ENCODE measurements at regions of chr6 and their contacts with region 1.

Region 1: DNA sequence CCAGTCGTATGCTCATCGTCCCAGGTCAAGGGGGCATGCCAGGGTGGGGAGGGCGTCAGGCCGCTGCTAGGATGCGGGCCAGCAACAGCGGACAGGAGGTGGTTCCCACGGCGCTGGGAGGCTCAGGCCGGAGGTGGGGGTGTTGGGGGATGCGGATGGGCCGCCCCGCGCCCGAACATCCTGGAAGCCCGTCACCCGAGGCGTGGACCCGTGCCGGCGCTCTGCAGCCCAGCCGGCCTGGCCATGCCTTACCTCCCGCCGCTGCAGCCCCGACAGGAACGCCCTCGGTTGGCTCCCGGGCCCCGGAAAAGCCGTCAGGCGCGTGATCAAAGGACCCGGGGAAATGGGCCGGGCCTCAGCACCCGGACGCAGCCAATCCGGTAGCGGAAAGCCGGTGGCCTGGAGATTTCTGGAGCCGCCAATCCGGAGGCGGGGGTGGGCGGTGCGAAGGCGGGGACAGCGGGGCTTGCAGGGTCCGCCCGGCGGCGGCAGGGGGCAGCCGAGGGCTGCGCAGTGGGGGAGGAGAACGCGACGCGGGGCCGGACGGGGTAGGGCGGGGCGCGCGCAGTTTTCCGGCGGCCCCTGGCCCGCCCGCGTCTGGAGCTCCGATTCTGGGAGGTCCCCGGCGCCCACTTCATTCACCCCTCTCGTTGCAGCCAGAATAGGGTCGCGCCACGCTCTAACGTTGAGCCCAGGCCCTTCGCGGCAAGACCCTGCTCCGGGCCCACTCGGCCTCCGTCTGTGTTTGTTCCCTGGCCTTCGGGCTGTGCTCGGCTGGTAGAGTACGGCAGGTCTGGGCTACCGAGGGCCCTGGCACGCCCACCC is at the start of gene SMIM29:
- DNase-seq: peak in 1 of 2 experiments; percentile 100
- H3K4me3 ChIP-seq: peak within 1 kb of the TSS; percentile 44 to 83 (median 72)
- H3K27ac ChIP-seq: no peak within 1 kb of the TSS; the same call in 1 of the 2 replicates
- H3K4me1 ChIP-seq: peaks cover 0 to 13% (median 7%) of the 10 kb centered on the region in 4 experiments; a peak in 6 of 7 replicates
- H3K27me3 ChIP-seq: no peaks in the 10 kb centered on the region; a peak in 2 of 7 replicates
- CTCF ChIP-seq: peak in 2 of 3 experiments; percentile 76 to 84; a peak in 3 of 4 replicates
- EP300 ChIP-seq: no peak; a peak in 1 of 3 replicates
- POLR2A ChIP-seq: no peak
- RAD21 ChIP-seq: peak; percentile 83 to 90
- total RNA-seq, gene SMIM29: 7.0 and 7.5 TPM in 2 replicates

Region 2: GRCh38 chr6:34172941-34173741 is 75.8 kb before region 1 on chr6:
- CTCF ChIA-PET with region 1: interaction called, 12 read pairs
- POLR2A ChIA-PET with region 1: interaction called, 10 read pairs
- DNase-seq: no peak
- H3K4me3 ChIP-seq: no peak overlapping the region
- H3K27ac ChIP-seq: no peak overlapping the region
- H3K4me1 ChIP-seq: peaks cover 0 to 2% (median 0%) of the 10 kb centered on the region in 4 experiments; a peak in 1 of 7 replicates
- H3K27me3 ChIP-seq: no peaks in the 10 kb centered on the region
- CTCF ChIP-seq: no peak
- EP300 ChIP-seq: no peak
- POLR2A ChIP-seq: no peak
- RAD21 ChIP-seq: no peak

Region 3: GRCh38 chr6:34189806-34190503 is 59.0 kb before region 1 on chr6:
- CTCF ChIA-PET with region 1: interaction called, 62 read pairs
- POLR2A ChIA-PET with region 1: interaction called, 212 read pairs
- DNase-seq: no peak
- H3K4me3 ChIP-seq: no peak overlapping the region
- H3K27ac ChIP-seq: no peak overlapping the region
- H3K4me1 ChIP-seq: no peaks in the 10 kb centered on the region
- H3K27me3 ChIP-seq: no peaks in the 10 kb centered on the region; a peak in 2 of 7 replicates
- CTCF ChIP-seq: no peak
- EP300 ChIP-seq: no peak
- POLR2A ChIP-seq: no peak
- RAD21 ChIP-seq: no peak

Region 4: DNA sequence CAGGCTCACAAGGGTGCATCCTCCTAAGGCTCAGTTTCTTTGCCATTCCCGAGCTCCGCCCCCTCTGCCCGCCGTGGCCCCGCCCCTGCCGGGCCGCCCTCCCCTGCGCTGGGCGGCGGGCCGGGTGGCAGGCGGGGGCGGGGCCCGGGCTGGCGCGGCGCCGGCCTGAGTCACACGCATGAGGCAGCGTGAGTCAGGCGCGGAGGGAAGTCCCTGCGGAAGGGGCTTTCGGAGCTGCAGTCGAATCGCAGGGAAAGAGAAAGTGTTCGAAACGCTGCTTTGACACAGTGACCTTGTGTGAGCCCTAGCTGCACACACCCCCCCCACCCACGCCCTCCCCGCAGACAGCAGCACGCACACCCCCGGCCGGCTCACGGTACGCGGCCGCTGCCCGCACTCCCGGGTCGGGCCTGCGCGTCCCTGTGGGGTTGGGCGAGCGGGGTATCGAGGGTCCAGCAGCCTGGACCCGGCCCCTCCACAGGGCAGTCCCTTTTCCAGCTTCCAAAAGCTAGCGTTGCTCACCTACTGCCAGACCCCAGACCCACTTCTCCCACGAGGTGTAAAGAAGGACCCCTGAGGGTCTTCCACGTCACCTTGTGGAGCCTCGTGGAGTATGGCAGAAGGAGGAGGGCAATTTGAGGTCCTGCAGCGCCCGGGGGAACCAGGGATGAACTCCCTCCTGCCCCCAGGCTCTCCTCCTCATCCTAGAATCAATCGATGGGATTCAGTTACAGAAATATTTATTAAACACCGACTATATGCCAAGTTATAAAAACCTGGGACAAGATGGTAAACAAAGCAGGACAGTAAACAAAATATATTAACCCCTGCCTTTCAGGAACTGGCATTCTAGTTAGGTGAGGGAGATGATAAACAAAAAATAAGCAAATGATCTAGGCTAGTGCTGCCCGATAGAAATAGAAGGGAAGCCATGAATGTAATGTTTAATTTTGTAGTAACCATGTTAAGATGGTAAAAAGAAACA is 24.7 kb before region 1 on chr6:
- CTCF ChIA-PET with region 1: interaction called, 7 read pairs
- POLR2A ChIA-PET with region 1: interaction called, 191 read pairs
- DNase-seq: peak in 1 of 2 experiments; percentile 95
- H3K4me3 ChIP-seq: peak overlapping the region; percentile 28 to 57 (median 36)
- H3K27ac ChIP-seq: peak overlapping the region; percentile 67
- H3K4me1 ChIP-seq: peaks cover 10 to 37% (median 30%) of the 10 kb centered on the region in 4 experiments
- H3K27me3 ChIP-seq: no peaks in the 10 kb centered on the region
- CTCF ChIP-seq: no peak
- EP300 ChIP-seq: no peak
- POLR2A ChIP-seq: peak in 1 of 2 experiments; percentile 65; a peak in 2 of 3 replicates
- RAD21 ChIP-seq: no peak

Region 5: GRCh38 chr6:34392497-34393190 is 143.7 kb after region 1 on chr6 and contains the start of gene NUDT3:
- CTCF ChIA-PET with region 1: interaction called, 8 read pairs
- POLR2A ChIA-PET with region 1: interaction called, 20 read pairs
- DNase-seq: peak; percentile 80 to 96
- H3K4me3 ChIP-seq: peak within 1 kb of the TSS; percentile 78 to 99 (median 83)
- H3K27ac ChIP-seq: peak within 1 kb of the TSS; percentile 66
- H3K4me1 ChIP-seq: peaks cover 0 to 4% (median 0%) of the 10 kb centered on the region in 4 experiments; a peak in 2 of 7 replicates
- H3K27me3 ChIP-seq: no peaks in the 10 kb centered on the region
- CTCF ChIP-seq: peak; percentile 75 to 85 (median 81)
- EP300 ChIP-seq: no peak
- POLR2A ChIP-seq: peak in 1 of 2 experiments; percentile 14; a peak in 1 of 3 replicates
- RAD21 ChIP-seq: peak; percentile 64 to 75
- total RNA-seq, gene NUDT3: 36.3 and 36.9 TPM in 2 replicates

Region 6: GRCh38 chr6:34425498-34426410 is 176.8 kb after region 1 on chr6 and contains the start of gene RPS10:
- CTCF ChIA-PET with region 1: interaction called, 6 read pairs
- POLR2A ChIA-PET with region 1: interaction called, 63 read pairs
- DNase-seq: peak; percentile 75 to 97
- H3K4me3 ChIP-seq: peak within 1 kb of the TSS; percentile 91 to 99 (median 95)
- H3K27ac ChIP-seq: peak within 1 kb of the TSS; percentile 92
- H3K4me1 ChIP-seq: peaks cover 0 to 11% (median 4%) of the 10 kb centered on the region in 4 experiments; a peak in 5 of 7 replicates
- H3K27me3 ChIP-seq: no peaks in the 10 kb centered on the region
- CTCF ChIP-seq: no peak
- EP300 ChIP-seq: no peak
- POLR2A ChIP-seq: peak; percentile 93 to 96
- RAD21 ChIP-seq: 0 out of 4 replicates have a peak, but pooled peaks have one; percentile 3 to 16
- total RNA-seq, gene RPS10: 2,408 and 2,434 TPM in 2 replicates

Region 7: GRCh38 chr6:34610819-34611477 is 362.0 kb after region 1 on chr6:
- CTCF ChIA-PET with region 1: interaction called, 13 read pairs
- POLR2A ChIA-PET with region 1: no interaction called
- DNase-seq: no peak
- H3K4me3 ChIP-seq: no peak overlapping the region
- H3K27ac ChIP-seq: no peak overlapping the region
- H3K4me1 ChIP-seq: no peaks in the 10 kb centered on the region
- H3K27me3 ChIP-seq: no peaks in the 10 kb centered on the region
- CTCF ChIP-seq: no peak
- EP300 ChIP-seq: no peak
- POLR2A ChIP-seq: no peak
- RAD21 ChIP-seq: no peak